ENCODE measurements at regions of chr13 and their contacts with region 1.

Region 1: GRCh38 chr13:45194081-45194939 is 6.5 kb downstream of the KCTD4 start:
- DNase-seq: peak; percentile 53 to 72
- ATAC-seq: peak; percentile 71
- H3K4me3 ChIP-seq: no peak overlapping the region
- H3K27ac ChIP-seq: no peak overlapping the region
- H3K4me1 ChIP-seq: no peaks in the 10 kb centered on the region
- H3K27me3 ChIP-seq: no peaks in the 10 kb centered on the region

Region 2: GRCh38 chr13:45239396-45239795 is 45.1 kb after region 1 on chr13:
- intact Hi-C with region 1: loop called in 1 of 2 experiments (anchors 5 kb)
- DNase-seq: no peak
- ATAC-seq: no peak
- H3K4me3 ChIP-seq: no peak overlapping the region
- H3K27ac ChIP-seq: no peak overlapping the region
- H3K4me1 ChIP-seq: peaks cover 2 to 3% of the 10 kb centered on the region in 2 donors
- H3K27me3 ChIP-seq: no peaks in the 10 kb centered on the region

Region 3: GRCh38 chr13:45280751-45281634 is 86.7 kb after region 1 on chr13:
- intact Hi-C with region 1: loop called in 1 of 2 experiments (anchors 5 kb)
- DNase-seq: peak; percentile 71 to 83
- ATAC-seq: peak; percentile 74
- H3K4me3 ChIP-seq: no peak overlapping the region
- H3K27ac ChIP-seq: no peak overlapping the region
- H3K4me1 ChIP-seq: no peaks in the 10 kb centered on the region
- H3K27me3 ChIP-seq: no peaks in the 10 kb centered on the region

Measured in aorta (tissue), 5 donors.